ENCODE measurements at regions of chr10 and their contacts with region 1.

Region 1: DNA sequence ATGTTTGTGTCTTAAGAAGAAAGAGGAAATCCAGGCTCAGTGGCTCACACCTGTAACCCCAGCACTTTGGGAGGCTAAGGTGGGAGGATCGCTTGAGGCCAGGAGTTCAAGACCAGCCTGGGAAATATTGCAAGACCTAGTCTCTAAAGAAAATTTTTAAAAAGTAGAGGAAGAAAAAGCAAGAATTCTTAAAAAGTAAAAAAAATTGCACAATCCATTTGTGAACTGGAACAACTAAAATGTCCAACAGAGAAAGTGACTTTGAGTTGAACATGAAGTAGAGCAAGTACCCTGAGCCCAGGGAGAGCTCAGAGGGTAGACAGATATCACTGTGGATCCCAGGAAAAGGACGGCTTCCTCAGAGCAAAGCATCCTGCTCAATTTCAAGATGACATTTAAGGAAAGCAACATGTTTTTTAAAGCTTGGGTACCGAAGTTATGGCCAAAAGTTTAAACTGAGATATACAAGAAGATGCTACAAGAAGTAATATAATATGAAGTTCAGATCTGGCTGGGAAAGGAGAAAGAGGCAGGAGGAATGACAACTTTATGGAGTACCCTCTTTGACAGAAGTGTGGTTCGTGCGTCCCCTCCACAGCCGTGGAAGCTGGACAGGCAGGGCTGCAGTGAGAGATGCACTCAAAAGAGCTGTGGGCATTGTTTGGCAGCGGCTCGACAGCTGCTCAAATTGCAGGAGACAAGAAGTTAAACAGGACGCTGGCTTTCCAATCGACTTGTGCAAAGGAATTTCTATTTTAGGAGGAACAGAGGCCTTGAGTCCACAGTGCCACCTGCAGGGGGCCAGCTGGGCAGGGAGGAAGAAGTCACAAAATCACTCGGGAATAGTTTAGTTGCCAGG is 201.3 kb downstream of the JCAD start:
- DNase-seq: peak; percentile 79

Region 2: DNA sequence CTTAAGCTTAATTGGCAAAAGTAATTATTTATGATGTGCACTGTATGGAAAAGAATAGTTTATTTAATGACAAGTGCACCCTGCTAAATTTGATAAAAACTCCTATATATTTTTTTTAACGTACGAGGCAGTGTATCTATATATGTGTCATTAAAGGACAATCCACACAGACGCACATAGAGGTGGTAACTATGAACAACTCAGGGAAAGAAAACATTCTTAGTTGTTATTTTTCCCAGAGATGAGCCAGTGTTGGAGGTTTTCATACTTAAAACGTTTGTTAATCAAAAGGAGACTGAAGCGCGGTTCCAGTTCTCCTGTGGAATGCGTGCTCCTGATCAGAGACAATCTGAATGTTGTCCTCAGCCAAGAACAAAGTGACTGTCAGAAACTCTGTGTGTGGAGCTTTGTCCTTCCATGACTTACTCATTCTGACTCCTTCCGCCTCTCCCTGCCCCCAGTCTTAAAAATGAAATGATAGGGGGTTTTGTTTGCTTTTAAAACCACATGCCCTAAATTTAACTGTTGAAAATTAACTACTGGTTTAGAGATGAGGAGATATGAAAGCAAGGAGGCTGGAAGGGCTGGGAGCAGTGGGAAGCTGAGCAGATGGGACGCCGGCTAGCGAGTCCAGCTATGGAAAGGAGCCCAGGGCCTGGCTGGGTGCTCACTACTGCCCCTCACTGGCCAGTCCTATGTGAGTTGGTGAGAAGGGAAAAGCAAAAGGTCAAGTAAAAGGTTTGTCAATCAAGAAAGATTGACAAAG is 322.9 kb before region 1 on chr10:
- intact Hi-C with region 1: loop called (anchors 10 kb)
- DNase-seq: no peak

Region 3: DNA sequence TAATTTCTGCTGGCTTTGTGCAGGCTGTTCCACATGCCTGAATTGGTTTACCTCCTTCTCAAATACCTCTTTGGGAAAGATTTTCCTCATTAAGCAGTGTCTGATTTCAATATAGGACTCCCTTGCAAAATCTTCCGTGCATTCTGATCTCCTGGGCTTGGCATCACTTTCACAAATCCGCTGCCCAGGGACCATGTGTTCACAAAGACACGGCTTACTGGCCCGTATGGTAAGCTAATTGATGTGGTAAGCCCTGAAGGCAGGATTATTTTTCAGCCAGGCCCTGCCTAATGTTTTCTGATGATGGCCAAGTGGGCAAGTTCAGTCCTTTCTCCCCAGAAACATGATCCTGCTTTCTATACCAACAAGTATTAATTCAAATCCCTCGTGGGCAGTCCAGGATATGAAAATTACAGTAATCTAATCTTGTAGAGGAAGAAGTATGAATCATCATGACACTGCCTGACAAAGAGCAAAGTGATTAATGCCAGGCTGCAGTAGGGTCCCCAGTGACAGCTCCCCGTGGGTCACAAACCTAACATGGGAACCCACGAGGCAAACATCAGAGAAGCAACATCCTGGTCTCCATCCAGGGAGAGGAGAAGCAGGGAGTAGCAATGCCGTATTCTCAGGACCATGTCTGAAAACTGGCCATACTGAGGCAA is 211.7 kb before region 1 on chr10:
- intact Hi-C with region 1: loop called (anchors 10 kb)
- DNase-seq: no peak

Region 4: GRCh38 chr10:30080161-30080560 is 222.1 kb after region 1 on chr10:
- intact Hi-C with region 1: no loop called
- DNase-seq: no peak